Right ventricle myocardium superior (tissue), 1 donor: ENCODE measurements at regions of chr19 and their contacts with region 1.

Region 1: GRCh38 chr19:6862673-6863078 is 24.7 kb upstream of the ADGRE1 start:
- DNase-seq: peak; percentile 88
- ATAC-seq: peak; percentile 96

Region 2: GRCh38 chr19:6632002-6632621 is 230.6 kb before region 1 on chr19:
- intact Hi-C with region 1: loop called (anchors 5 kb)
- DNase-seq: no peak
- ATAC-seq: peak; percentile 77

Region 3: GRCh38 chr19:6737284-6738046 is 125.2 kb before region 1 on chr19 and contains the start of gene GPR108:
- intact Hi-C with region 1: loop called (anchors 5 kb)
- DNase-seq: peak; percentile 100
- ATAC-seq: peak; percentile 84
- total RNA-seq, gene GPR108: 22.2 TPM

Region 4: GRCh38 chr19:6767357-6768235 is 95.1 kb before region 1 on chr19 and contains the start of gene SH2D3A:
- intact Hi-C with region 1: no loop called
- DNase-seq: peak; percentile 82
- ATAC-seq: peak; percentile 45
- total RNA-seq, gene SH2D3A: not detected